ENCODE measurements at regions of chr19 and their contacts with region 1.

Region 1: DNA sequence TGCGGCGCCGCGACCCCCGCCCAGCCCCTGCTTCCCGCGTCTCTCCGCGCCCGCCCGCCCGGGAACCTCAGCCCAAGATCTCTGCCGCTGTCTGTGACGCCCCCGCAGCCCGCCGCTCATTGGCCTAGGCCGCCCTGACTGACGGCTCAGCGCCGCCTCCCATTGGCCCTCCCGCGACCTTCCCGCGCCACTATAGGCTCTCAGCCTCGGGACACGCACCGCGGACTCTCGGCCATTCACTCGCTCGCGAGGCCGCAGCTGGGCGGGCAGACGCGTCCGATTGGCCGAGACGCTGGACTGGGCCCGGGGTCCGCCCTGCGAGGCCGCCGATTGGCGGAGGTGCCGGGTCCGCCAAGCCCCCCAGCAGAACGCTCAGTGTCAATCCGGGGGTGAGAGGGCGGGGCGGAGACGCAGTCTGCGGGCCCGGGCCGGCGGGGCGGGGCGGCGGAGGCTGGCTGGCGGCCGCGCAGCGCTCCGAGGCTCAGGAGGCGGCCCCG is at the start of gene PRKACA:
- DNase-seq: peak; percentile 99
- H3K4me3 ChIP-seq: peak within 1 kb of the TSS; percentile 77 to 84
- H3K27ac ChIP-seq: peak within 1 kb of the TSS; percentile 94 to 95
- H3K4me1 ChIP-seq: peaks cover 5% of the 10 kb centered on the region
- H3K27me3 ChIP-seq: no peaks in the 10 kb centered on the region
- CTCF ChIP-seq: peak in 1 of 4 experiments; percentile 17
- POLR2A ChIP-seq: peak; percentile 59
- total RNA-seq, gene PRKACA: 34.8 to 106 TPM

Region 2: GRCh38 chr19:14073261-14073924 is 44.3 kb before region 1 on chr19:
- intact Hi-C with region 1: loop called (anchors 5 kb)
- DNase-seq: peak; percentile 53
- H3K4me3 ChIP-seq: peak overlapping the region; percentile 35 to 66
- H3K27ac ChIP-seq: peak overlapping the region; percentile 76 to 91
- H3K4me1 ChIP-seq: peaks cover 13% of the 10 kb centered on the region
- H3K27me3 ChIP-seq: no peaks in the 10 kb centered on the region
- CTCF ChIP-seq: peak; percentile 13 to 93 (median 63)
- POLR2A ChIP-seq: peak; percentile 57

Region 3: DNA sequence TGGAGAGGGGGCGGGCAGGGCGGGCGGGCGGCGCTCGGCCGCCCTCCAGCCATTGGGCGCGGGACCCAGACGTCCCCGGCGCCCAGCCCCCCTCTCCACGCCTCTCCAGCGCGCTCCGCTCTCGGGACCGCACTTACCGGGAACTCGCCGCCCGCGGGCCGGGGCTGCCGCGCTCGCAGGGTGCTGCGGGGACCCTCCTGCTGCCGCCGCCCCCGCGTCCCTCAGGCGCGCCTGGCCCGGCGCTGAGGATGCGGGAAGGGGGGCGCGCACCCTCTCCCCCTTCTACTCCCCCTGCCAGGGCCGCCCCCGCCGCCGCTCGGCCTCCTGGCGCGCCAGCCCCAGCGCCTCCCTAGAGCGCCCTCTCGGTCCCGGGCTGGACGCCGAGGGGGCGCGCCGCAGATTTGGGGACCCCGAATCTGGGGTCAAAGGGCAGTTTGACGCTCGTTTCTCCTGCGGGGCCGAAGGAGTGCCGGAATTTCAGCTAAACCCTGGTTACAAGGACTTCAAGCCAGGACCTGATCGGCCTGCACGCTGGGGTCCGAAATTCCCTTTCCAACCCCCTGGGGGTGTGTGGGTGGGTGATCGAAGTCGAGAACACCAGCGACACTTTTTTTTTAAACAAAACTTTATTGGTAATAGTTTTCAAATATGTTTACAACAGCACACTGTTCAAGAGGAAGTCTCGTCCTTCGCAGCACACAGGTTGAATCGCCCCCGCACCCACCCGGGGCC is 26.5 kb before region 1 on chr19:
- intact Hi-C with region 1: loop called (anchors 2 kb)
- DNase-seq: no peak
- H3K4me3 ChIP-seq: peak overlapping the region; percentile 82 to 89
- H3K27ac ChIP-seq: peak overlapping the region; percentile 84 to 92
- H3K4me1 ChIP-seq: no peaks in the 10 kb centered on the region
- H3K27me3 ChIP-seq: no peaks in the 10 kb centered on the region
- CTCF ChIP-seq: peak in 1 of 4 experiments; percentile 24
- POLR2A ChIP-seq: peak; percentile 87

Region 4: DNA sequence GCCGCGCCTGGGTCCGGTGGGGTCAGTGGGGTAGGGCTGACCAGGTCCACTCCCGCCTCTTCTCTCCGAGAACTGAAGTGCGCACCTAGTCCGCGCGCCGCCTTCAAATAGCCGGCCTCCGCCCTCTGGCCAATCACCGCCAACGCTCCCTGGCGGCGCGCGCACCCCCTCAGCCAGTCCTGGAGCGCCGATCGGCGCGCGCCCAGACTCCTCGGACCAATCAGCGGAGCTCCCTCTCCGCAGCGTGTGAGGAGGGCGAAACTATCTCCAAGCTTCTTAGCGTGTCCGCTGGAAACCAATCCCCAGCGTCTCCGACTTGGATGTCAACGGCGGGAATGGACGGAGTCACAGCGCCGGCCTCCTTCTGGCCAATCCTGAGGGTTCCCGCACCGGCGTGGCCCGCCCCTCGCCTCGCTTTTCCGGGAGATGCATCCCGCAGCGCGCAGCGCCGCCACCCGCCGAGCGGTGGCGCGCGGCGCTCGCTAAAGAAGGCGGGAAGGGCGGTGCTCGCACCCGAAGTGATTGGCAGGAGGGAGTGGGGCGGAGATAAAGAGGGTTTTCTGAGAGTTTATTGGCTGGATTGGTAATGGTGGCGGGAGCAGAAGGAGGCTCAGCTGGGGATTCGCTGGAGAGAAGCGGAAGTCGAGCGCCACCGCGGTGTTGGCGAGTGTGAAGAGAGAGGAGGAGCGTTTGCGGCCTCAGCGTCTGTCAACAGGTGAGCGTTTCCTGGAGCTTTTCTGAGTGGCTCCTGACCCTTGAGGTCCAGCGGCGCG is 19.0 kb after region 1 on chr19 and contains the start of gene ASF1B:
- intact Hi-C with region 1: loop called (anchors 2 kb)
- DNase-seq: peak; percentile 99
- H3K4me3 ChIP-seq: peak within 1 kb of the TSS; percentile 60 to 77
- H3K27ac ChIP-seq: peak within 1 kb of the TSS; percentile 93 to 98
- H3K4me1 ChIP-seq: peaks cover 11% of the 10 kb centered on the region
- H3K27me3 ChIP-seq: no peaks in the 10 kb centered on the region
- CTCF ChIP-seq: peak; percentile 91 to 100 (median 96)
- POLR2A ChIP-seq: peak; percentile 87
- total RNA-seq, gene ASF1B: 5.1 to 19.7 TPM

Measured in prostate gland (tissue), 2 donors.